AG04449 (cell line): ENCODE measurements at regions of chr14 and their contacts with region 1.

Region 1: DNA sequence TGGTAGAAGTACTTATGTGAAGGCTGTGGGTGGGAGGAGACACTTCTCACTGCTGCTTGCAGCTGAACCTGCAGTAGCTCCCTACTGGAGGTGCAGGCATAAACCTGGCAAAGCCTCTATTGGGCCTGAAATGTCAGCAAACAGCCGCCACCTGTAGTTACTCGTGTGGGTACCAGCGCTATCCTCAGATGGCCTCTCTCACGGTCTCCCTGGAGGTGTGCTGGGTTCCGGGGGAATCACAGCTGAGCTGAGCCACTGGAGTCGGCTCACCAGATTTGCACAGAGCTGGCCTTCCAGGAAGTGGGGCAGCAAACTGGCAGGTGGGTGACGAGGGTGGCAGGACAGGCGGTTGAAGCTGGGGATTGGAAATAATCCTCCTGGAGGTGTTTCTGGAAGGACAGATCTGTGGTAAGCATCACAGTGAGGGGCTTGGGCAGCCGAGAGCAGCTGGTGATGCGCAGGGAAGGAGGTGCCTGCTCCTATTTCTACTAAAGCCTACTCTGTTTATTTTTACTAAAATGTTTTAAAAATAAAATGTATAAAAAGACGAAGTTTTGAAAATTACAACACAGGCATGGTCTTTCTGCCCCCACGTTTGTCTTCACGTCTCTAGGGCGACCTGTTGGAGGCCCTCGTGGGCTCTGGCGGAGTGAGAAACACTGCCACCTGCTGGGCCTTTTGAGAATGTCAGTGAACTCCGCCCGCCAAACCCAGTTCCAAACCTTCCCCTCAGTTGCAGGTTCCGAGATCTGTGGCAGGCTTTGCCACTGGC is 67.8 kb upstream of the PLEKHG3 start:
- DNase-seq: no peak
- H3K4me3 ChIP-seq: no peak overlapping the region
- CTCF ChIP-seq: peak; percentile 82

Region 2: DNA sequence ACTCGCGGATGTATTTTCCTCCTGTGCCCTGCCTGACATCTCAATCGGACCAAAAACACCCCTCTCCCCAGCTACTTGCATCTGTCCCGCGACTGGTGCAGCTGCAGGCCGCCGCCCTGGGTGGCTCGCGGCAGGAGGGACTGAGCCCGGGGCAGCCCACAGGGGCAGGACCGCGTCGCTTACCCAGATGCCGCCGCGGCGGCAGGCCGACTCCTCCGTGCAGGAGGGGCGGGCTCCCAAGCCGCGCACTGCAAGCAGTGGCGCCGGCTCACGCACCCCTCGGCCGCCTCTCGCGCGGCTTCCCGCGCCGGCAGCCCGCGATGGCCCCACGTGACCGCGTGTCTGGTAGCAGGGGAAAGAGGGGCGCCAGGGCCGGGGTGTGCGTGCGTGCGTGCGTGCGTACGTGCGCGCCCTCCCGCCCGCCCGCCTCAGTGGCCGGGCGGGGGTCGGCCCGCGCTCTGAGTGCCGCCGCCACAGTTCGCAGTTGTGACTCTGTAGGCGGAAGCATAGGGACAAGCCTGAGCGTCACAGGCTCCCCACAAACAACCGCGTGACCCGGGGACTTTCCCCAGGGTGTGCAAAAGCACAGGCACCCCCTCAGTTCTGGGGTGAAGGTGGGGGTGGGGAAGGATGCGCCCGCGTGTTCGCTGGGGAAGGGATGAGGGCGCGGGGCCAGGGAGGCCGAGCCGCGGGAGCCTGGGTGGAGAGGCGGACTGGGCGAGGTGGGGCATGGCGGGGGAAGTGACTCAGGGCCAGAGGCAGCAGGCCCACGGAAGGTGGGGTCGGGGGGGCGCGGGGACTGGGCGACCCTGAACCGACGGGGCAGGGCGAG is 132.7 kb before region 1 on chr14 and contains the start of gene ZBTB25:
- CTCF ChIA-PET with region 1: interaction called, 36 read pairs
- POLR2A ChIA-PET with region 1: no interaction called
- DNase-seq: peak; percentile 58
- H3K4me3 ChIP-seq: peak within 1 kb of the TSS; percentile 86
- CTCF ChIP-seq: no peak

Region 3: GRCh38 chr14:64540208-64541157 is 95.9 kb before region 1 on chr14 and contains the start of gene HSPA2:
- CTCF ChIA-PET with region 1: interaction called, 78 read pairs
- POLR2A ChIA-PET with region 1: interaction called, 19 read pairs
- DNase-seq: peak; percentile 98
- H3K4me3 ChIP-seq: peak within 1 kb of the TSS; percentile 85
- CTCF ChIP-seq: peak; percentile 94

Region 4: GRCh38 chr14:64556526-64556925 is 79.9 kb before region 1 on chr14:
- CTCF ChIA-PET with region 1: interaction called, 14 read pairs
- POLR2A ChIA-PET with region 1: no interaction called
- DNase-seq: peak; percentile 53
- H3K4me3 ChIP-seq: no peak overlapping the region
- CTCF ChIP-seq: no peak

Region 5: GRCh38 chr14:64654246-64654900 is 18.0 kb after region 1 on chr14:
- CTCF ChIA-PET with region 1: interaction called, 21 read pairs
- POLR2A ChIA-PET with region 1: no interaction called
- DNase-seq: peak; percentile 87
- H3K4me3 ChIP-seq: no peak overlapping the region
- CTCF ChIP-seq: no peak

Region 6: GRCh38 chr14:64745511-64746091 is 109.2 kb after region 1 on chr14:
- CTCF ChIA-PET with region 1: no interaction called
- POLR2A ChIA-PET with region 1: no interaction called
- DNase-seq: no peak
- H3K4me3 ChIP-seq: no peak overlapping the region
- CTCF ChIP-seq: peak; percentile 20